HepG2 (cell line): ENCODE measurements at regions of chrX and their contacts with region 1.

Region 1: DNA sequence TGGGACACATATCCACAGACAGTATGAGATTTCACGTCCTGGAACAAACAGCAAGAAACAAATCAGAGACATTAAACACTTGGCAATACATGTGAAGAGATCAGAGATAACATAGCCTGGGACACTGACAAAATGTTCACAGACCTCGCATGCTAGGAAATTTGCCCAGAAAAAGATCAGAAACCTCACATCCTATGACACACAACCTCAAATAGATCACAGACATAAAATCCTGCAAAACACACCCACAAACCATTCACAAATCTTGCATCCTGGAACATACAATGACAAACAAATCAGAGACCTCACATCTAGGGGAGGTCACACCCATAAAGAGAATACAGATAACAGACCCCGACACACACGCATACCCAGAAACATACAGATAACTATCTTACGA is 18.0 kb downstream of the SUV39H1 start:
- DNase-seq: no peak
- ATAC-seq: no peak
- H3K4me3 ChIP-seq: no peak overlapping the region
- H3K27ac ChIP-seq: peak overlapping the region; percentile 100
- H3K4me1 ChIP-seq: peaks cover 81% of the 10 kb centered on the region
- H3K27me3 ChIP-seq: no peaks in the 10 kb centered on the region; a peak in 1 of 5 replicates
- CTCF ChIP-seq: no peak
- EP300 ChIP-seq: no peak
- POLR2A ChIP-seq: no peak
- RAD21 ChIP-seq: no peak

Region 2: GRCh38 chrX:48468693-48469691 is 245.6 kb before region 1 on chrX:
- CTCF ChIA-PET with region 1: no interaction called
- POLR2A ChIA-PET with region 1: no interaction called
- in situ Hi-C with region 1: no loop called
- intact Hi-C with region 1: no loop called
- DNase-seq: no peak
- ATAC-seq: peak; percentile 13
- H3K4me3 ChIP-seq: peak overlapping the region; percentile 63 to 74 (median 74)
- H3K27ac ChIP-seq: peak overlapping the region; percentile 67
- H3K4me1 ChIP-seq: peaks cover 65% of the 10 kb centered on the region
- H3K27me3 ChIP-seq: no peaks in the 10 kb centered on the region; a peak in 1 of 5 replicates
- CTCF ChIP-seq: peak; percentile 58
- EP300 ChIP-seq: no peak
- POLR2A ChIP-seq: no peak
- RAD21 ChIP-seq: no peak

Region 3: DNA sequence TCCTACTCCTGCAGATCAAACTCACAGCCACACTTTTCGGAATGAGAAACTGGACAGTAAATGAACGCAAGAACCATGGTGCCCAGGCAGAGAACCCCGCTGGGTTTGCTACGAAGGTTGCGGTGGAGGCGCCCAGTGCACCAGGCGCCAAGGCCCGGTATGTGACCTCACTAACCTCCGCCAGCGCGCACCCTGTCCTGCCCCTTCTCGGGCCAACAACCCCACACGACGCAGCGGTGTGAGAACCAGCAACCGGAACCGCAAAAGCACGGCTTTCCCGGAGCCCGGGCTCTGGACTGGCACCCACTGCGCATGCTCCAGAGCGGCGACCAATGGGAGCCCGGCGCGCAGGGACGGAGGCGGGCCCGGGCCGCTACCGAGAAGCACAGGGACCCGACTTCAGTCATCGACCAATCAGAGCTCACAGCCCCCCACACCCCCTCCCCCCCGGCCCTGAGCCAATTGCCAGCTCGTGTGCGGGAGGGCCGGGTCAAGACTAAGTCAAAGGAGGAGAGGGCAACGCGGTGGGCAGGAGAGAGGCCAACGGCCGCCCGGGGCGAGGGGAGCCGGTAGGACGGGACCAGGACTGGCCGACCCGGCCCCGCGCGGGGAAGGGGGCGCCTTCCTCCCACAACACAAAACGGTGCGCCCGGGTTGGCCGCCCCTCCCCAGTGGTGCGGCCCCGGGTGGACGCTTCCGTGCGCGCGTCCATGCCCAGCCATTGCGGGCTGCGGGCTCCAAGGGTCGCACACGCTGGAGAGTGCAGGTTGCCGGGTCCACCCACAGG is 38.3 kb before region 1 on chrX:
- CTCF ChIA-PET with region 1: no interaction called
- POLR2A ChIA-PET with region 1: interaction called, 45 read pairs
- in situ Hi-C with region 1: no loop called
- intact Hi-C with region 1: no loop called
- DNase-seq: peak; percentile 84
- ATAC-seq: peak; percentile 88
- H3K4me3 ChIP-seq: peak overlapping the region; percentile 69 to 93 (median 87)
- H3K27ac ChIP-seq: peak overlapping the region; percentile 98
- H3K4me1 ChIP-seq: peaks cover 23% of the 10 kb centered on the region
- H3K27me3 ChIP-seq: no peaks in the 10 kb centered on the region
- CTCF ChIP-seq: no peak
- EP300 ChIP-seq: no peak
- POLR2A ChIP-seq: peak; percentile 78 to 87
- RAD21 ChIP-seq: no peak

Region 4: GRCh38 chrX:48696301-48697181 is 18.0 kb before region 1 on chrX and contains the start of gene SUV39H1:
- CTCF ChIA-PET with region 1: no interaction called
- POLR2A ChIA-PET with region 1: interaction called, 12 read pairs
- in situ Hi-C with region 1: no loop called
- intact Hi-C with region 1: no loop called
- DNase-seq: peak; percentile 71
- ATAC-seq: peak; percentile 94
- H3K4me3 ChIP-seq: peak within 1 kb of the TSS; percentile 54 to 75 (median 62)
- H3K27ac ChIP-seq: peak within 1 kb of the TSS; percentile 65
- H3K4me1 ChIP-seq: peaks cover 17% of the 10 kb centered on the region
- H3K27me3 ChIP-seq: no peaks in the 10 kb centered on the region
- CTCF ChIP-seq: no peak
- EP300 ChIP-seq: no peak
- POLR2A ChIP-seq: peak; percentile 52 to 74
- RAD21 ChIP-seq: no peak
- total RNA-seq, gene SUV39H1: 9.9 and 10.1 TPM in 2 replicates

Region 5: GRCh38 chrX:48703642-48704481 is 10.7 kb before region 1 on chrX:
- CTCF ChIA-PET with region 1: no interaction called
- POLR2A ChIA-PET with region 1: interaction called, 17 read pairs
- in situ Hi-C with region 1: no loop called
- intact Hi-C with region 1: no loop called
- DNase-seq: no peak
- ATAC-seq: no peak
- H3K4me3 ChIP-seq: no peak overlapping the region
- H3K27ac ChIP-seq: no peak overlapping the region
- H3K4me1 ChIP-seq: peaks cover 22% of the 10 kb centered on the region
- H3K27me3 ChIP-seq: no peaks in the 10 kb centered on the region
- CTCF ChIP-seq: no peak
- EP300 ChIP-seq: no peak
- POLR2A ChIP-seq: no peak
- RAD21 ChIP-seq: no peak

Region 6: DNA sequence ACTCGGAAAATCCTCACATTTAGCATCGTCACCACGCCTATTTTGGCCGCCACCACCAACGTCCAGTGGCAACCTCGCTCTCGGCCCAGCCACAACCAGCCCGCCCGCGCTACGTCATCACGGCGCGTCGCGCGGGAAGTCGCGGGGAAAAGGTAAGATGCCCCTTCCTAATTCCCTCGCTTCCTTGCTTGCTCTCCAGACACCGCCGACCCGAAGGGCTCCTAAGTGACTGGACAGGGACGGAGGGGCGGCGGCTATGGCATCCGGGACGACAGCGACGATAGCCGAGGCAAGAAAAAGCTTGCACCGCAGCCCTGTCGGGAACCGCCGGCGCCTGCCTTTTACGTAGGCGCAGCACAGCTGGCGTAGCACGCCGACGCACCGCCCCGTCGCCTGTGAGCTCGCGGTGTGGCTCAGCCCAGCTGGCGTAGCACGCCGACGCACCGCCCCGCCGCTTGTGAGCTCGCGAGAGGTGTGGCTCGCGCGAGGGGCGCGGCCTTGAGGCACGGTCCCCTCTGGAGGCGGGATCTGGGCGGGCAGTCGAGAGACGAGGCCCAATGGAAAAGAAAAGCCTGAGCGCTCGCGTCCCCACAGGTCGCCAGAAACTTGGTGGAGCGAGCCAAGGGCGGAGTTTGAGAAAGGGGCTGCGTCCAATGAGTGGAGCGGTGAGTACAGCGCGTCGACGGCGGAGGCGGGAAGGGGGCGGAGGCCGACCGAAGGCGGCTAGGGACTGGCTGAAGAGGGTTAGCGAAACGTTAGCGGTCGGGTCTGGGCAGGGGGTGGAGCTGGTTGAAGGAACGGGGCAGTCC is 86.9 kb after region 1 on chrX and contains the start of gene HDAC6:
- CTCF ChIA-PET with region 1: no interaction called
- POLR2A ChIA-PET with region 1: interaction called, 11 read pairs
- in situ Hi-C with region 1: no loop called
- intact Hi-C with region 1: no loop called
- DNase-seq: peak; percentile 95
- ATAC-seq: peak; percentile 91
- H3K4me3 ChIP-seq: peak within 1 kb of the TSS; percentile 80 to 84 (median 81)
- H3K27ac ChIP-seq: peak within 1 kb of the TSS; percentile 98
- H3K4me1 ChIP-seq: peaks cover 38% of the 10 kb centered on the region
- H3K27me3 ChIP-seq: no peaks in the 10 kb centered on the region; a peak in 1 of 5 replicates
- CTCF ChIP-seq: no peak
- EP300 ChIP-seq: no peak
- POLR2A ChIP-seq: peak in 1 of 2 experiments; percentile 44; a peak in 2 of 4 replicates
- RAD21 ChIP-seq: no peak
- total RNA-seq, gene HDAC6: 57.8 and 80.4 TPM in 2 replicates